OCI-LY7 (cell line): ENCODE measurements at regions of chr7 and their contacts with region 1.

Region 1: GRCh38 chr7:94087664-94088352 is 83.7 kb upstream of the BET1 start:
- DNase-seq: peak; percentile 83
- H3K4me3 ChIP-seq: peak overlapping the region; percentile 52
- H3K27ac ChIP-seq: no peak overlapping the region
- H3K4me1 ChIP-seq: peaks cover 20% of the 10 kb centered on the region
- CTCF ChIP-seq: peak; percentile 98

Region 2: GRCh38 chr7:93711926-93712325 is 375.9 kb before region 1 on chr7:
- CTCF ChIA-PET with region 1: no interaction called
- POLR2A ChIA-PET with region 1: no interaction called
- intact Hi-C with region 1: no loop called
- DNase-seq: no peak
- H3K4me3 ChIP-seq: no peak overlapping the region
- H3K27ac ChIP-seq: no peak overlapping the region
- H3K4me1 ChIP-seq: no peaks in the 10 kb centered on the region
- CTCF ChIP-seq: no peak

Region 3: DNA sequence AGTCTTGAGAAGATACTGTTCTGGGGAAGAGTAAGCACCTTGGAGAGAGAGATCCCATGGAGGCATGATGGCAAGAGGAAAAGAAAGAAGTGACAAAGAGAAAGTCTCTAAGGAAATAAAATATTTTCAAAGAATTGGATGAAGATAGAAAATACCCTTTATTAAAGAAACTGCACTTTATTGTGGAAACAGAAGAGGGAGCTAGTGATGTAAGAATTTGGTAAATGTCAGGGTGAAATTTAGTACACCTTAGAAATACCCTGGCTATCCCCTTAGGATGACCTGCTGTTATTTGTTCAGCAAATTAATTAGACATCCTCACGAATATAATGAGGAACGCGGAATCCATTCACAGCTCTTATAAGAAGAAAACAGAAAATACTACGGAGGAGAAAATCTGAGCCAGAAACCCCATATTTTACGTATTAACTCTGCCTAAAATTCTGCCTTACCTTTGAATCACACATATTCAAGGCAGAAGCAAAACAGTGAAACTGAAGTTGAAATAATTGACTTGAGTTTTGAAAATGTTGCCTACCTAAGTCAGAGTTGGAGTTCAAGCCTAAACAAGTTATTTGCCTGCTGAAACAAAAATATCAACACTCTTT is 288.0 kb before region 1 on chr7:
- CTCF ChIA-PET with region 1: no interaction called
- POLR2A ChIA-PET with region 1: no interaction called
- intact Hi-C with region 1: loop called (anchors 10 kb)
- DNase-seq: peak; percentile 29
- H3K4me3 ChIP-seq: no peak overlapping the region
- H3K27ac ChIP-seq: no peak overlapping the region
- H3K4me1 ChIP-seq: no peaks in the 10 kb centered on the region
- CTCF ChIP-seq: peak; percentile 83

Region 4: DNA sequence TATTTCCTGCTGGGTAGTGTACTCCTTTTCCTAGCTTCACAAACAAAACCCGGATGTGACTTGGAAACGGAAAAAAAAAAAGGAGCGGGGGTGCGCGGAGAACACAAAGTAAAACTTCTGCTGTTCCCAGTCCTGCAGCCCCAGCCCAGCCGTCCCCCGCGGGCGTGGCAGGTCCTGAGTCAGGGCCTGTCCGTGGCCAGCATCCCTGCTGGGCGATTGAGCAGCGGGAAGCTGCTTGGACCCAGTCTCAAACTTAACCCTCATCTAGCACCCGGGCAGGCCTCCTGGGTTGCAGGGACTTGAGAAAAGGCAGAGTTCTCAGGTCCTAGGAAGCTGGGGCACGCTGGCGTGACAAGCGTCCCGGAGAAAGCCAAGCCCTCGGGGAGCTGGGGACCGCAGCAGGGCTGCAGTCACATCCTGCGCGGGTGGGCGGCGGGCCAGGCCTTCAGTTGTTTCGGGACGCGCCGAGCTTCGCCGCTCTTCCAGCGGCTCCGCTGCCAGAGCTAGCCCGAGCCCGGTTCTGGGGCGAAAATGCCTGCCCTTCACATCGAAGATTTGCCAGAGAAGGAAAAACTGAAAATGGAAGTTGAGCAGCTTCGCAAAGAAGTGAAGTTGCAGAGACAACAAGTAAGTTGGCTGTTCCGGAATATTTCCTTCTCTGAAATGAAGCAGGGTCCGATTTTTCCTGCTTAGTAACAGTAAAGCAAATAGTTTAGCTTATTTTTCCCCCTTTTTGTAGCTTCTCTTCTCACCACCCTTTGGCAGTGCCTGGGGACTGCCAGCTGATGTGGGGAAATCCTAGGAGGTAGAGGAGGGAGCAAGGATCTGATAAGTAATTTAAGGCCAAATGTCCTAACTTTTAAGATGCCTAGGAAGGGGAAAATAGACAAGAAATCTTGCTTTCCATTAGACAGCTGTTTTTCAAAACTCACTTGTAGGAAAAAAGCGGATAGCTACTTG is 165.9 kb before region 1 on chr7 and contains the start of gene GNG11:
- CTCF ChIA-PET with region 1: interaction called, 10 read pairs
- POLR2A ChIA-PET with region 1: interaction called, 7 read pairs
- intact Hi-C with region 1: no loop called
- DNase-seq: peak; percentile 57
- H3K4me3 ChIP-seq: peak within 1 kb of the TSS; percentile 68
- H3K27ac ChIP-seq: no peak within 1 kb of the TSS
- H3K4me1 ChIP-seq: peaks cover 14% of the 10 kb centered on the region
- CTCF ChIP-seq: 0 out of 2 replicates have a peak, but pooled peaks have one; percentile 15
- total RNA-seq, gene GNG11: 0.82 and 1.4 TPM in 2 replicates

Region 5: DNA sequence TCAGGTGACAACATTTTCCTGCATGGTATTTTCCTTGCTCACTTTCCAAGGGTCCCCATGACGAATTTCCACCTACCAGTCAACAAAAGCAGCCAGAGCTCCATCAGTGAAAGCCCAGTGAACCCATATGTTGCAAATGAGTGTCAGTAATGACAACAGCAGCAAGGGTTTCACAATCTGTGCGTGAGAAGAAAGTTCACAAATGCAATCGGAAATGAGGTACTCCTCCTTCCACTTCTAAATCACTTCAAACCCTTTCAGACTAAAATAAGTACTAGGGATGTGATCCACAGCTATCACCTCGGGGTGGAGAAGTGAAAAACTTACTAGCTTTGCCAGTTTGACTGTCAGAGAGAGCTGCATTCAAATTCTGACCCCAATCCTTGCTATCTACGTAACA is 28.1 kb before region 1 on chr7:
- CTCF ChIA-PET with region 1: interaction called, 4 read pairs
- POLR2A ChIA-PET with region 1: interaction called, 13 read pairs
- intact Hi-C with region 1: no loop called
- DNase-seq: peak; percentile 22
- H3K4me3 ChIP-seq: no peak overlapping the region
- H3K27ac ChIP-seq: peak overlapping the region; percentile 6
- H3K4me1 ChIP-seq: peaks cover 61% of the 10 kb centered on the region
- CTCF ChIP-seq: no peak

Region 6: DNA sequence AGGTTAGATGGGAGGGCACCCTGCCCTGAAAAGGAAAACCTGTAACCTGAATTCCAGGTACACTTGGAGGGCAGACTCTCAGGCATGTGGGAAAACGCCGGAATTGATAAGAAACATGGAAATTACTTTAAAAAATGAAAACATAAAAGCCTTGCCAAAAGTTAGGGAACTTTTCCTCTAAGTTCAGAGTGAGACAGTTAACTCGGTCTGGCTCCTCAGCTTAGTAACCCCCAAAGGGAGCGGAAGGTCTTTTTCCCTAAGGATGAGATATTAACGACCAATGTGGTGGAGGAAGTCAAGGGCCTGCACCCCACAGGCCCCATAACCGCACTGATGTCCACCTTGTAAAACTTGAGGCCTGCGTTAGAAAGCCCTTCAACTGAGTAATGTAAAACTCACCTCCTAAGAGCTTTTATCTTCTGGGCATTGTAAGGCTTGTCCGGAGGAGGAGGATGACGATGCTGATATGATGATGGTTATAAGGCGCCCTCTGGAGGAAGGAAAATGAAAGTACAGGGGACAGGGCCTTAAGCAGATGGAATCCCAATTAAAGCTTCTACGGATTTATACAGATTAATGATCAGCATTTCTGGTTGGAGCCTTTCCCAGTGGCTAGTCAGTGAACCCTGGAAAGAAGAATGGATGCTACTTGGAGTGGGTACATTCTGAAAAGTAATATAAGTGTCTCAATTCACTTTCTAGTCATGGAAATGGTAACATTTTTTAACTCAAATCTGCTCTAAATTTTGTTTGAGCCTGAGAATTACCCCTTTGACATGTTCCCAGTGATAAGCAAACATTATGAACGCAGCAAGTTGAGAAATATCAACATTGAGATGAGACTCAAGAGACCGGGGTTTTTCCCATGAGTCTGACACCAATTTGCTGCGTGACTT is 307.6 kb after region 1 on chr7:
- CTCF ChIA-PET with region 1: interaction called, 5 read pairs
- POLR2A ChIA-PET with region 1: no interaction called
- intact Hi-C with region 1: loop called (anchors 10 kb)
- DNase-seq: peak; percentile 64
- H3K4me3 ChIP-seq: no peak overlapping the region
- H3K27ac ChIP-seq: no peak overlapping the region
- H3K4me1 ChIP-seq: no peaks in the 10 kb centered on the region
- CTCF ChIP-seq: peak; percentile 89